Cardiac septum (tissue), 1 donor: ENCODE measurements at regions of chr17 and their contacts with region 1.

Region 1: GRCh38 chr17:75412455-75413317 is 7.2 kb upstream of the GRB2 start:
- DNase-seq: no peak

Region 2: GRCh38 chr17:75006653-75007052 is 406.0 kb before region 1 on chr17:
- intact Hi-C with region 1: no loop called
- DNase-seq: no peak

Region 3: GRCh38 chr17:75271233-75271954 is 141.3 kb before region 1 on chr17:
- intact Hi-C with region 1: loop called (anchors 5 kb)
- DNase-seq: peak; percentile 94